Endothelial cell of umbilical vein (primary cell): ENCODE measurements at regions of chr22 and their contacts with region 1.

Region 1: DNA sequence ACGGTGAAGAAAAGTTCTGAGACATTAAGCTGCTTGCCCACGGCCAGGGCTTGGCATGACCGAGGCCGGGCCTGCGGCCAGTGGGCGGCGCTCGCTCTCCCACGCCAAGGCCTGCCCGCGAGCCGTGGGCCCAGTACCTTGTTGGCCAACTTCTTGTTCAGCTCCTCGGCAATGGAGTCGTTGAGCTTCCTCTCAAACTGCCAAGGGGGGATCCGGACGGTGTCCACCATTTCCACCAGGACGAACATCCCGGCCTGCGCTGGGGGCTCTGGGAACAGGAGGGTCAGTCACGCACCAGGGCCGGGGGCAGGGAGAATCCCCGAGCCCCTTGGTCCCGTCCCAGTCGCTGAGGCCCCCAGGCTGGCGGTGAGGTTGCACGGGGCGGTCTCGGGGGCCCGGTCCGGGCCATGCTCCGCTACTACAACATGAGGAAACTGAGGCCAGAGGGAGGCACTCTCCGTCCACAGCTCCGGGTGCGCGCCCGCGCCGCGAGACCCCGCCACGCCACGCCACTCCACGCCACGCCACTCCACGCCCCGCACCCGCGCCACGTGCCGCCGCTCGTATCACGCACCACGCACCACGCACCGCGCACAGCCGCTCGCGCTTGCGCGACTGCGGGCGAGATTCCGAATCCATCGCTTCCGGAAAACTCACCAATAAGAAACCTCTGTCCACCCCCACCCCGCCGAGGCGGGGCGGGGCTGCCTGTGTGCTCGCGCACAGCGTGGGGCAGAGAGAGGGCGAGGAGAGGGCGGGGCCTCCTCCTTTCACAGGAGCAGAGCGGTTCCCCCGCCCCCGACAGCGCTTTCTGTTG is at the start of gene POLR3H:
- DNase-seq: peak; percentile 98
- H3K4me3 ChIP-seq: peak within 1 kb of the TSS; percentile 54 to 88 (median 78)
- H3K27ac ChIP-seq: peak within 1 kb of the TSS; percentile 58
- H3K4me1 ChIP-seq: peaks cover 11% of the 10 kb centered on the region
- H3K27me3 ChIP-seq: no peaks in the 10 kb centered on the region
- CTCF ChIP-seq: peak; percentile 72 to 82
- POLR2A ChIP-seq: peak; percentile 20
- total RNA-seq, gene POLR3H: 39.4 and 42.3 TPM in 2 replicates

Region 2: GRCh38 chr22:40665312-40665711 is 878.8 kb before region 1 on chr22:
- CTCF ChIA-PET with region 1: no interaction called
- POLR2A ChIA-PET with region 1: no interaction called
- dilution Hi-C with region 1: no loop called
- intact Hi-C with region 1: no loop called
- DNase-seq: no peak
- H3K4me3 ChIP-seq: no peak overlapping the region
- H3K27ac ChIP-seq: no peak overlapping the region
- H3K4me1 ChIP-seq: no peaks in the 10 kb centered on the region
- H3K27me3 ChIP-seq: no peaks in the 10 kb centered on the region
- CTCF ChIP-seq: no peak
- POLR2A ChIP-seq: no peak

Region 3: DNA sequence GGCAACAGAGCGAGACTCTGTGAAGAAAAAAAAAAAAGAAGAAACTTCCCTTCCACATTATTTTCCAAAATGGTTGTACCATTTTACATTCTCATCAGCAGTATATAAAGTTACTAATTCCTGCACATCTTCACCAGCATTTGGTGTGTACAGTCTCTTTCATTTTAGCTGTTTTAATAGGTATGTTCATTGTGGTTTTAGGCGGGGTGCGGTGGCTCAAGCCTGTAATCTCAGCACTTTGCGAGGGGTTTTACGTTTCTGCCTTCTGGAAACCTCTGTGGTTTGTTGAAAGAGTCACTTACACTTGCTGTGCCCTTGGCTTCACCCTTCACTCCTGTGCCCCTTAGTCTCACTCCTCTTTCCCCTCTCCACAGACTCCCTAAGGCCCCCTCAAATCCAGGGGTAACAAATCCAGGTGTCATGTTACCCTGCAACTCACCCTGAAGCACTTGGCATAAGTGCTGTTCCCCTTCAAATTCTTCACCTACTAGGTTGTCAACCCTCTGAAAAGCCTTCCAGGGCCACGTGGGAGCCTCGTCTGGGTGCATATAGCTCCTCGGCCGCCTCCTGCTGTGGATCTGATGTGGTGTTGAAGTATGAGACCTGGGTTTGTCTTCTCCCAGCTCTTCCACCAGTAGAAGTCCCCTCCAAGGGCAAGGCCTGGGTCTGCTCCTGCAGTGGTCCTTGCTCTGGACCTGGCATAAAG is 118.2 kb before region 1 on chr22:
- CTCF ChIA-PET with region 1: no interaction called
- POLR2A ChIA-PET with region 1: no interaction called
- dilution Hi-C with region 1: no loop called
- intact Hi-C with region 1: no loop called
- DNase-seq: no peak
- H3K4me3 ChIP-seq: no peak overlapping the region
- H3K27ac ChIP-seq: no peak overlapping the region
- H3K4me1 ChIP-seq: no peaks in the 10 kb centered on the region
- H3K27me3 ChIP-seq: no peaks in the 10 kb centered on the region
- CTCF ChIP-seq: no peak
- POLR2A ChIP-seq: no peak

Region 4: GRCh38 chr22:41532908-41533825 is 10.9 kb before region 1 on chr22:
- CTCF ChIA-PET with region 1: interaction called, 11 read pairs
- POLR2A ChIA-PET with region 1: no interaction called
- dilution Hi-C with region 1: no loop called
- intact Hi-C with region 1: no loop called
- DNase-seq: peak; percentile 59
- H3K4me3 ChIP-seq: no peak overlapping the region
- H3K27ac ChIP-seq: no peak overlapping the region
- H3K4me1 ChIP-seq: no peaks in the 10 kb centered on the region
- H3K27me3 ChIP-seq: no peaks in the 10 kb centered on the region
- CTCF ChIP-seq: peak; percentile 86 to 87
- POLR2A ChIP-seq: no peak

Region 5: DNA sequence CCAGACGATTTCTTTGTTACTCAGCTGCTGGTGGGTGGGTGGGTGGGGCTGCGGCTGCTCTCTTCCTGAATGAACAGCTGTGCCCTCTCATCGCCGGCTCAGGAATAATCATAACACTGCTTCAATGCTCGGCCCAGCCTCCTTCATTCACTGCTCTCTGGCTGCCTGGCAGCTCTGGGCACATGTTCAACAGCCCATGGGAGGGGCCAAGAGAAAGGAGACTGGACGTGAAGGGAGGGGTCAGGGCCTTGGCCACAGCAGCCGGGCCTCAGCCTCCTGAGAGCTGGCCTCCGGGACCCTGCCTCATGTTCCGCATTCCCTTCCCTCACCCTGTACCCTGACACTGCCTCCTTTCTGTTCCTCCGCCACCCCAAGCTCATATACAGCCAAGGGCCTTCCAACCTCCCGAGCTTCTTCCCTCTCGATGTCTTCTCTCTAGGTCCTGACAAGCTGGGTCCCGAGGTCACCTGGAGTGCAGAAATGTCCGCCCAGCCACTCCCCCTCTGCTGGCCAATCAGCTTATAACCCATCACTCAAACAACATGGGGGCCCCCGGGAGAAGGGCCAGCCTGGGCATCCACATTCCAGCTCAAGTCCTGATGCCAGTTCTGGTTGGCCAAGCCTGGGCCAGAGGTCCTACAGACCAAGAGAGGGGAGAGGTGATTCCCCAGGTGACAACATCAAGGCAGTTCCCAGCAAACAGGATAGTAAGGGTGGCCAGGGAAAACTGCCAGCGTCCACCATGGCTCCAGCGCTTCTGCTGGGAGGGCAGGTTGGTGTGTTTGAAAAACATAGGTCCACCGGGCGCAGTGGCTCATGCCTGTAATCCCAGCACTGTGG is 13.6 kb after region 1 on chr22:
- CTCF ChIA-PET with region 1: interaction called, 18 read pairs
- POLR2A ChIA-PET with region 1: interaction called, 4 read pairs
- dilution Hi-C with region 1: no loop called
- intact Hi-C with region 1: no loop called
- DNase-seq: peak; percentile 64
- H3K4me3 ChIP-seq: no peak overlapping the region
- H3K27ac ChIP-seq: no peak overlapping the region
- H3K4me1 ChIP-seq: no peaks in the 10 kb centered on the region
- H3K27me3 ChIP-seq: peaks cover 0 to 8% of the 10 kb centered on the region in 2 experiments
- CTCF ChIP-seq: no peak
- POLR2A ChIP-seq: no peak

Region 6: GRCh38 chr22:41589391-41590241 is 45.6 kb after region 1 on chr22 and contains the start of gene PMM1:
- CTCF ChIA-PET with region 1: interaction called, 35 read pairs
- POLR2A ChIA-PET with region 1: interaction called, 9 read pairs
- dilution Hi-C with region 1: no loop called
- intact Hi-C with region 1: loop called (anchors 1 kb)
- DNase-seq: peak; percentile 100
- H3K4me3 ChIP-seq: peak within 1 kb of the TSS; percentile 25 to 70 (median 54)
- H3K27ac ChIP-seq: peak within 1 kb of the TSS; percentile 30
- H3K4me1 ChIP-seq: peaks cover 6% of the 10 kb centered on the region
- H3K27me3 ChIP-seq: no peaks in the 10 kb centered on the region
- CTCF ChIP-seq: no peak
- POLR2A ChIP-seq: peak; percentile 65
- total RNA-seq, gene PMM1: 12.8 and 14.6 TPM in 2 replicates

Region 7: GRCh38 chr22:41596776-41597634 is 52.9 kb after region 1 on chr22:
- CTCF ChIA-PET with region 1: interaction called, 61 read pairs
- POLR2A ChIA-PET with region 1: interaction called, 5 read pairs
- dilution Hi-C with region 1: no loop called
- intact Hi-C with region 1: loop called (anchors 1 kb)
- DNase-seq: peak; percentile 48
- H3K4me3 ChIP-seq: no peak overlapping the region
- H3K27ac ChIP-seq: no peak overlapping the region
- H3K4me1 ChIP-seq: peaks cover 15% of the 10 kb centered on the region
- H3K27me3 ChIP-seq: no peaks in the 10 kb centered on the region
- CTCF ChIP-seq: peak; percentile 73 to 88
- POLR2A ChIP-seq: no peak

Region 8: DNA sequence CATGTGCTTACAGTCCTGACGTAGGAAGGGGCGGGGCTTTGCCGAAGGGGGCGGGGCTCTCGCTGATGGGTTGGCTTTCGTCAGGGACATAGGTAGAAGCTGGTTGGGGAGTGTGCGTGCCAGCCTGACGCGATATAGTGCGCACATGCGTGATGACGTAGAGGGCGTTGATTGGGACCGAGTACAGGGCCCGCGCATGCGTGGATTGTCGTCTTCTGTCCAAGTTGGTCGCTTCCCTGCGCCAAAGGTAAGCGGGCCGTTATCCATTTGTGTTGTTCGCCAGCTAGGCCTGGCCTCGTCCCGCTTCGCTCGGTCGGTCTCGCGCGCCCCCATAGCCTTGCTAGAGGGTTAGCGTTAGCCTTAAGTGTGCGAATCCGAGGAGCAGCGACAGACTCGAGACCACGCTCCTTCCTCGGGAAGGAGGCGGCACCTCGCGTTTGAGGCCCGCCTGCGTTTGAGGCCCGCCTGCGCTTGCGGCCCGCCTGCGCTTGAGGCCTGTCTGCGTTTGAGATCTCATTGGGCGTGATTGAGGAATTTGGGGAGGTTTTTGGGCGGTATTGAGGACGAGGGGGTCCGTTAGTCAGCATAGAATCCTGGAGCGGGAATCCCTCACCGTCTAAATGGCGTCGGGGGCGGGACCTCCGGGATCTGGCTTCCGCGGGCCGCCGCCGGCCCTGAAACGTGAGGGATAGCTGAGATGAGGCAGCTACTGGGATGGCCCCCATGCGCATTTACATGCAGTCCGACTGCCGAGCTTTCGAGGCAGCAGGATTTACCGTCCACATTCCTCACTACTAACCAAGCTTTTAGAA is 77.2 kb after region 1 on chr22 and contains the start of gene XRCC6:
- CTCF ChIA-PET with region 1: interaction called, 14 read pairs
- POLR2A ChIA-PET with region 1: interaction called, 3 read pairs
- dilution Hi-C with region 1: no loop called
- intact Hi-C with region 1: no loop called
- DNase-seq: peak; percentile 100
- H3K4me3 ChIP-seq: peak within 1 kb of the TSS; percentile 80 to 86 (median 86)
- H3K27ac ChIP-seq: peak within 1 kb of the TSS; percentile 89
- H3K4me1 ChIP-seq: peaks cover 25% of the 10 kb centered on the region
- H3K27me3 ChIP-seq: no peaks in the 10 kb centered on the region
- CTCF ChIP-seq: no peak
- POLR2A ChIP-seq: peak; percentile 96
- total RNA-seq, gene XRCC6: 309 and 313 TPM in 2 replicates

Region 9: DNA sequence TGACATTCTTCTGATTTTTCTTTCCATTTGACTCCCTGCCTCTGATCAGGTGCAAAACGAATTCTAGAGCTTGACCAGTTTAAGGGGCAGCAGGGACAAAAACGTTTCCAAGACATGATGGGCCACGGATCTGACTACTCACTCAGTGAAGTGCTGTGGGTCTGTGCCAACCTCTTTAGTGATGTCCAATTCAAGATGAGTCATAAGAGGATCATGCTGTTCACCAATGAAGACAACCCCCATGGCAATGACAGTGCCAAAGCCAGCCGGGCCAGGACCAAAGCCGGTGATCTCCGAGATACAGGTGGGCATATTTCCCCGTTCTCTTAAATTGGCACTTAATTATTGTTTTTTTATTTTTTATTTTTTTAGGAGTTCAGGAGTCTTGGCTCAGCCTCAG is 92.4 kb after region 1 on chr22:
- CTCF ChIA-PET with region 1: no interaction called
- POLR2A ChIA-PET with region 1: no interaction called
- dilution Hi-C with region 1: no loop called
- intact Hi-C with region 1: no loop called
- DNase-seq: no peak
- H3K4me3 ChIP-seq: no peak overlapping the region
- H3K27ac ChIP-seq: no peak overlapping the region
- H3K4me1 ChIP-seq: no peaks in the 10 kb centered on the region
- H3K27me3 ChIP-seq: no peaks in the 10 kb centered on the region
- CTCF ChIP-seq: no peak
- POLR2A ChIP-seq: no peak